K562 (cell line): ENCODE measurements at regions of chr5 and their contacts with region 1.

Region 1: DNA sequence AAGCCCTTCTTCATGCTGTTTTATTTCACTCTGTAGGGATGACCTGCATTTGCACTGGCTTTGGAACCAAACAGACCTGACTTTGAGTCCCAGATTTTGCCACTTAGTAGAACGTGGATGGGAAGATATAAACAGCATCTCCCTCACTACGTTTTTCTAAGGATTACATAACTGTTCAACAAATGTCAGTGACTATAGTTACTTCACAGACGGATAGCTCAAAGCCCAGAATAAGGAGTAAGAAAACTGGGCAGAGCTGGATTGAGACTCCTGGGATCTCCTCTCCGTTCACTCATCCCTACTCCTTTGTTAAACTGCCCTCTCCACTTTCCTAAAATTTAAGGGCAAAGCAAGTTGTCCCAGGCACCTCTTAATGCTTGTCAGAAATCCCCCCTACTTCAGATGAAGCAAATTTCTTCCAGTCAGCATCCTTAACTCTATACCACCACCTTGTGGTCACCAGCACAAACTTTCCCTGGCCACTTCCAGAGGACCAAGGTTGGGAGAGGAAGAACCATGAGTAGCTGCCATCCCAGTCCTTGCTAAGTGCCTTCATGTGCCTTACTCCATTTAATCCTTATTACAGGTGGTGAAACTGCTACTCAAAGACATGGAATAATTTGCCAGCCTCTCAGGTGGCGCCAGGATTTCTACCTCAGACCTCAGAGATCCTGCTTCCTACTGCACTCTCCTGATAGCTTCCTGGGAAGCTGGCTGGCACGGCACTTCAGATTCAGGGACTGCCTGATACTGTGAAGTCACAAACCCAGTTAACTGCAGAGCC is 38.4 kb downstream of the EGR1 start:
- DNase-seq: peak; percentile 74 to 80 (median 77)
- ATAC-seq: peak; percentile 81
- H3K4me3 ChIP-seq: no peak overlapping the region
- H3K27ac ChIP-seq: no peak overlapping the region
- H3K4me1 ChIP-seq: peaks cover 0 to 2% of the 10 kb centered on the region in 2 experiments; a peak in 1 of 5 replicates
- H3K27me3 ChIP-seq: no peaks in the 10 kb centered on the region
- CTCF ChIP-seq: peak; percentile 86 to 89 (median 88)
- EP300 ChIP-seq: no peak
- POLR2A ChIP-seq: no peak
- RAD21 ChIP-seq: peak; percentile 98

Region 2: DNA sequence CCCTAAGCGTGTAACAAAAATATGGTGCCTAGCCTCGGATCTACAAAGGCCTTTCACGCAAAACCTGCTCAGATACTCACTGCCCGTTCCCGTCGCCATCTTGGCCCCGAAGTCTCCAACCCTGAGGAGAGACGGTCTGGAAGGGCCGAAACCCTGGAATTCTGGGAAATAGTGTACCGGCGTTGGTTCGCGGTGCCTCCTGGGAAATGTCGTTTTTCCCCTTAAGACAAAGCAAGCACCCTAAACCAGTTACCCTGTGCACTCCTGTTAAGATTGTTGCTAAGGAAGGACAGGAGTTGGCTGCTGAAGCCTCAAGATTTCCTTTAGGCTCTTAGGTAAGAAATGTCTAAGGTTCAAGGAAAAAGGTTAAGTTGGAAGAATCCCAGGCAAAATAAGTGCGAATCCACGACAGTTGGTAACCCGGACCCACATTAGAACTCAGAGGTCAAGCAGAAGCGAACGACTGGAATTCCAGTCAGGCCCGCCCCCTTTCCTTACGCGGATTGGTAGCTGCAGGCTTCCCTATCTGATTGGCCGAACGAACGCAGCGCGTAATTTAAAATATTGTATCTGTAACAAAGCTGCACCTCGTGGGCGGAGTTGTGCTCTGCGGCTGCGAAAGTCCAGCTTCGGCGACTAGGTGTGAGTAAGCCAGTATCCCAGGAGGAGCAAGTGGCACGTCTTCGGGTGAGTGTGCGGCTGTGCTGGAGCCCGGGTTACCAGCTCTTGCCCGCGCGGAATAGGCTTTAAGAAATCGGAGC is 325.0 kb before region 1 on chr5 and contains the starts of genes BRD8 and KIF20A:
- CTCF ChIA-PET with region 1: interaction called, 3 read pairs
- POLR2A ChIA-PET with region 1: interaction called, 3 read pairs
- in situ Hi-C with region 1: no loop called
- intact Hi-C with region 1: loop called (anchors 1 kb)
- DNase-seq: peak; percentile 86 to 98 (median 91)
- ATAC-seq: peak; percentile 90
- H3K4me3 ChIP-seq: peak within 1 kb of the TSS; percentile 63
- H3K27ac ChIP-seq: peak within 1 kb of the TSS; percentile 99
- H3K4me1 ChIP-seq: peaks cover 0 to 5% of the 10 kb centered on the region in 2 experiments; a peak in 1 of 5 replicates
- H3K27me3 ChIP-seq: no peaks in the 10 kb centered on the region
- CTCF ChIP-seq: no peak; a peak in 1 of 6 replicates
- EP300 ChIP-seq: no peak
- POLR2A ChIP-seq: peak; percentile 94
- RAD21 ChIP-seq: no peak
- polyA plus RNA-seq, gene BRD8: 89.5 to 141 TPM
- polyA plus RNA-seq, gene KIF20A: 39.8 to 58.7 TPM

Region 3: GRCh38 chr5:138449501-138450239 is 54.0 kb before region 1 on chr5:
- CTCF ChIA-PET with region 1: interaction called, 26 read pairs
- POLR2A ChIA-PET with region 1: interaction called, 21 read pairs
- in situ Hi-C with region 1: no loop called
- intact Hi-C with region 1: loop called (anchors 1 kb)
- DNase-seq: peak; percentile 90 to 93 (median 92)
- ATAC-seq: peak; percentile 95
- H3K4me3 ChIP-seq: no peak overlapping the region
- H3K27ac ChIP-seq: no peak overlapping the region
- H3K4me1 ChIP-seq: peaks cover 9 to 47% of the 10 kb centered on the region in 2 experiments; a peak in 4 of 5 replicates
- H3K27me3 ChIP-seq: no peaks in the 10 kb centered on the region
- CTCF ChIP-seq: peak; percentile 96 to 98 (median 97)
- EP300 ChIP-seq: no peak
- POLR2A ChIP-seq: no peak
- RAD21 ChIP-seq: peak; percentile 91 to 96

Region 4: DNA sequence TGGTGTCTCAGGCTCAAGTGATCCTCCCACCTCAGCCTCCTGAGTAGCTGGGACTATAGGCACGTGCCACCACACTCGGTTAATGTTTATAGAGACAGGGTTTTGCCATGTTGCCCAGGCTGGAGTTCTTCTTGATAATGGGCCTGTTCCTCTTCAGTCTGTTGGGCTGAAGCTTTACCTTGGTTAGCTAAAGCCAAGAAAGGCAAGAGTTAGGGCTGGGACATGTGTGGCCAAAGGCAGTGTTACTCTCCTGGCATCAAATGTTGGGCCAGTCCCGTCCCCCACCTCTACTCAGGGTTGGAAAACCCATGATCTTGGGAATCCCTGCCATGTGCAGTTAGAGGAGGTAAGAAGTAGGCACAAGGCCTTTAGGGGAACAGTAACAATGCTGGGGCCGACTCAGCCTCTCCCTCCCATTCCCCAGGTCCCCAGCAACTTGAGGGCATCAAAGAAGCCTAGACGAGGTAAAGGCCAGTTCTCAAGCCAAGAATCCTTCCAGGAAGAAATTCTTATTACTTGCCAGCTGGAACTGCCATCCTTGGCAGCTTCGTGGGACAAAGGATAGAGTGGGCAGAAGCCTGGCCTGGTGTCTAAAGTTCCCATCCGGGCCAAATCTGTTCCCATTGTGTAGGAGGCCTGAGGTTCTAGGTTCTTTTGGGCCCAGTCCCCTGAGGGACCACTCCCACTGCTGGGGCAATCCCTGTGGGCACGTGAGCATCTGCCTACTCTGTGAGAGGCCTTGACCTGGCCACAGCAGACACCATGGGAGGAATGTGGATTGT is 33.9 kb before region 1 on chr5:
- CTCF ChIA-PET with region 1: interaction called, 57 read pairs
- POLR2A ChIA-PET with region 1: interaction called, 46 read pairs
- in situ Hi-C with region 1: loop called (anchors 5 kb)
- intact Hi-C with region 1: loop called (anchors 1 kb)
- DNase-seq: peak in 1 of 4 experiments; percentile 44
- ATAC-seq: peak; percentile 24
- H3K4me3 ChIP-seq: no peak overlapping the region
- H3K27ac ChIP-seq: no peak overlapping the region
- H3K4me1 ChIP-seq: peaks cover 19 to 29% of the 10 kb centered on the region in 2 experiments; a peak in 4 of 5 replicates
- H3K27me3 ChIP-seq: no peaks in the 10 kb centered on the region
- CTCF ChIP-seq: no peak
- EP300 ChIP-seq: peak; percentile 19; the same call in 1 of the 2 replicates
- POLR2A ChIP-seq: peak; percentile 99
- RAD21 ChIP-seq: no peak

Region 5: DNA sequence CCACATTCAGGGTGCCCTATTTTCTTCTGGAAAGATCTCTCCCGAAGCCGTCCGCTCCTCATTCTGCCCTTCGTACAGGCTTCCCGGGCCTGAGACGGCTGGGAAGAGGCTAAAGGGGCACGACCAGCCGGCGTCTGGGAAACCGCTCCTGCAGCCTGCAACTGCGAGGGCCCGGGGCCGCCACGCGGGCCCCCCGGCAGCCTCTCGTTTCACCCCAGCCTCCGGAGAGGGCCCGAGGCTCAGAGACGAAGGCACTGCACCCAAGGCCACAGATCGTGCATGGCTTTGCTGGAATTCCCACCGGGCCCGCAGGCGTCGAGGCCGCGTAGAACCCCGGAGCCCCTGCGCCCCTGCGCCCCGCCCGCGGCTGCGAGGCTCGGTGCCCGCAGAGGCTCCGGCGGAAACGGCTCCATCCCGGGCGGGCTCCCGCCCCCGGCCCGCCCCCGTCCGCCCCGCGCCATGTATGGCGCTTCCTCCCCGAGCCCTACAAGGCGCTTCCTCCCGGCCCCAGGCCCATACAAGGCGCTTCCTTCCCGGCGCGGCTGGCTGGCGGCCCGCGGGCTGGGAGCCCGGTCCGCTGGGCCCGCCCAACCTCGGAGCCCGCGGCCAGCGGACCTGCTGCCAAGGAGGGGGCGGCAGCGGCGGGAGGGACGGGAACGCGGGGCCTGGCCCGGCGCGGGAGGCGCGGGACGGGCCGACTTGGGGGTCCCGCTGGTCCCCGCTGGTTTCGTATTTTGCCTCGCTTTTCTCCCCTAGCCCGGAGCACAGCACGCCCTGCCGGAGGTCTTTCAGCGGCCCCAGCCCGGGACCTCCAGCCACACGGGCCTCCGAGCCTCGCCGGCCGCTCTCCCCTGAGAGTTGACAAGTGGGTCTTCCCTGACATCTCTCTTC is 11.8 kb before region 1 on chr5:
- CTCF ChIA-PET with region 1: no interaction called
- POLR2A ChIA-PET with region 1: interaction called, 13 read pairs
- in situ Hi-C with region 1: no loop called
- intact Hi-C with region 1: no loop called
- DNase-seq: peak; percentile 88 to 91 (median 90)
- ATAC-seq: peak; percentile 90
- H3K4me3 ChIP-seq: peak overlapping the region; percentile 49
- H3K27ac ChIP-seq: peak overlapping the region; percentile 78
- H3K4me1 ChIP-seq: peaks cover 51 to 54% of the 10 kb centered on the region in 2 experiments
- H3K27me3 ChIP-seq: no peaks in the 10 kb centered on the region
- CTCF ChIP-seq: no peak
- EP300 ChIP-seq: 0 out of 2 replicates have a peak, but pooled peaks have one; percentile 6
- POLR2A ChIP-seq: peak; percentile 29; the same call in 1 of the 2 replicates
- RAD21 ChIP-seq: peak in 1 of 2 experiments; percentile 3; a peak in 2 of 4 replicates

Region 6: DNA sequence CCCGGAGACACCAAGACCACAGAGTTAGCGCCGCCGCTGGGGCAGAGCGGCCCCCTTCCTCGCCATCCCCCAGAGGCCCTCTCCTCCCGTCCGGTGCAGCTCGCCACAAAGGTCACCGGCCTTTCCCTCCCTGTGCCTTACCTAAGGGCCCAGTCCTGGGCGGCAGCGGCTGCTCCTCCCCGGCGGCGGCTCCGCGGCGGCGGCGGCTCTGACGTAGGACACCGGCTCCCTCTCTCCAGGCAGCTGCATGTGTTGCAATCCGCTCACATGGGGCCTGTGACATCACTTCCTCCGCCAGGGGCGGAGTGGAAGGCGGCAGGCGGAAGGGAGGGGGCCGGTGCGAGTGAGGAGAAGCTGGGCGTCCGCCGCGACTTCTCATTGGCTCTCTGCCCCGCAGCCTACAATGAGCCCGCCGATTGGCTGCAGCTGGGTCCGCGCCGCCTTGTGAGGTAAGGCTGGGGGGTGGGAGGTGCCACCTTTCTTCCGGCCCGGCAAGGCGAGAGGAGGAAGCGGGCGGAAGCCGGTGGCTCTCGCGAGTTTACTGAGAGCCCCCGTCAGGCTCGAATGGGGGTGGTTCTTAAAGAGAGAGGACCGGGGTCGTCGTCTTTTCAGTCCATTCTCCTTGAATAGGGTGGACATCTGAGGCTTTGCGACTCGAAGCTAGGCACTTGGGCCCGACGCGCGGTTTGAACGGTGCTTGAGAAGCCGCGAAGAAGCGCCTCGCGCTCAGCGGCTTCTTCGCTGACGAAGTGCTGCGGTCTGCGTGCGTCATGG is 39.5 kb after region 1 on chr5 and contains the start of gene ETF1:
- CTCF ChIA-PET with region 1: no interaction called
- POLR2A ChIA-PET with region 1: interaction called, 13 read pairs
- in situ Hi-C with region 1: no loop called
- intact Hi-C with region 1: loop called (anchors 2 kb)
- DNase-seq: peak; percentile 98 to 100 (median 99)
- ATAC-seq: peak; percentile 88
- H3K4me3 ChIP-seq: peak within 1 kb of the TSS; percentile 97
- H3K27ac ChIP-seq: peak within 1 kb of the TSS; percentile 97
- H3K4me1 ChIP-seq: peaks cover 7 to 36% of the 10 kb centered on the region in 2 experiments
- H3K27me3 ChIP-seq: no peaks in the 10 kb centered on the region
- CTCF ChIP-seq: 0 out of 6 replicates have a peak, but pooled peaks of 1 of the 3 experiments have one; percentile 8
- EP300 ChIP-seq: 0 out of 2 replicates have a peak, but pooled peaks have one; percentile 13
- POLR2A ChIP-seq: peak; percentile 94
- RAD21 ChIP-seq: no peak
- polyA plus RNA-seq, gene ETF1: 53.7 to 57.3 TPM

Region 7: GRCh38 chr5:138552700-138553099 is 49.0 kb after region 1 on chr5:
- CTCF ChIA-PET with region 1: no interaction called
- POLR2A ChIA-PET with region 1: no interaction called
- in situ Hi-C with region 1: no loop called
- intact Hi-C with region 1: loop called (anchors 2 kb)
- DNase-seq: no peak
- ATAC-seq: peak; percentile 13
- H3K4me3 ChIP-seq: no peak overlapping the region
- H3K27ac ChIP-seq: no peak overlapping the region
- H3K4me1 ChIP-seq: no peaks in the 10 kb centered on the region
- H3K27me3 ChIP-seq: no peaks in the 10 kb centered on the region
- CTCF ChIP-seq: no peak
- EP300 ChIP-seq: no peak
- POLR2A ChIP-seq: peak; percentile 8; the same call in 1 of the 2 replicates
- RAD21 ChIP-seq: no peak